ENCODE measurements at regions of chr2 and their contacts with region 1.

Region 1: DNA sequence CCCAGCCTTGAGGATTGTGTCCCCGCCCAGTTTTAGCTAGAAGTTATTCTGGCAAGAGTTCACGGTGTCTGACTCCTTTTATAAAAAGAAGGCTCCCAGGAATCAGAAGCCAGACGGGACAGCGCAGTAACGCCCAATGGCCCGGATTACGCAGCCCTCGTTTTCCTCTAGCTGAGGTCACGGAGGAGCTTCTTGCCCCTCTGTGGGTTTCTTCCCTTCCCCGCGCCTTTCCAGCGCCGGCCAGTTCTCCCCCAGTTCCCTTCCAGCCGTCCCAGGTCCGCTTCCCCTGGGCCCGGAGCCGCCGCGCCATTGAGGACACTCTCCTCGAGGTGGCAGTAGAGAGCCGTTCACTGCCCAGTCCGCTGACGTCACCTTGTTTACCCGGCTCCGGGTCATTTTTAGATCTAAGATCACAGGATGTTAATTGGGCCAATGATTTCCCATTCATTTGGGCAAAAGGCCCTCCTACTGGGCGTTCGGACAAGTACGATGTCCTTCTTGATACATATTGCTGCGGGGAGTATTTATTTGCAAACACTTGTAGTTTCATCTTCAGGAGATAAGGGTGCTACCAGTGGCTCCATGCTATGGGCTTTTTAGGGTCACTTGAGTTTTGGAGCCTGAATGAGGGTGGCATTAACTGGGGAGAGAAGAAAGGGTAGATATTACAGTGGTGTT is 81.5 kb upstream of the PPM1B start:
- H3K4me3 ChIP-seq: peak overlapping the region; percentile 13
- H3K27ac ChIP-seq: no peak overlapping the region
- H3K4me1 ChIP-seq: no peaks in the 10 kb centered on the region
- CTCF ChIP-seq: peak; percentile 86

Region 2: DNA sequence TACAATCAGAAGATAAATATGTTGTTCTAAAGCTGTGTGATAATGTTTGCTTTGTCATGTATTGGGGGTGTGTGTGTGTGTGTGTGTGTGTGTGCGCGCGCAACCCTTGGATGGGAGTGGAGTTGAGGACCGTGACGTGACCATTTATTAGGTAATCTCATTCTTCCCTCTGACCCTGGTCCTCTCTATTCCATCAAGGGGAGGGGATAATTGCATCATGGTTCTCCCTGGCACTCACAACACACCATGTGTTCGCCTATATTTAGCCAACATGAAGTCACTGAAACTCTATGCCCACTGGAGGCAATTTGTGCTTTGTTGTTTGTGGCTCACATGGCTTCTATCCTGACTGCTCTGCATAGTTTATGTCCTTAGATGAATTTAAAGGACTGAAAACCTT is 11.6 kb before region 1 on chr2:
- CTCF ChIA-PET with region 1: interaction called, 10 read pairs
- POLR2A ChIA-PET with region 1: no interaction called
- H3K4me3 ChIP-seq: no peak overlapping the region
- H3K27ac ChIP-seq: no peak overlapping the region
- H3K4me1 ChIP-seq: no peaks in the 10 kb centered on the region
- CTCF ChIP-seq: no peak